Dorsolateral prefrontal cortex (tissue), 120 donors: ENCODE measurements at regions of chr5 and their contacts with region 1.

Region 1: DNA sequence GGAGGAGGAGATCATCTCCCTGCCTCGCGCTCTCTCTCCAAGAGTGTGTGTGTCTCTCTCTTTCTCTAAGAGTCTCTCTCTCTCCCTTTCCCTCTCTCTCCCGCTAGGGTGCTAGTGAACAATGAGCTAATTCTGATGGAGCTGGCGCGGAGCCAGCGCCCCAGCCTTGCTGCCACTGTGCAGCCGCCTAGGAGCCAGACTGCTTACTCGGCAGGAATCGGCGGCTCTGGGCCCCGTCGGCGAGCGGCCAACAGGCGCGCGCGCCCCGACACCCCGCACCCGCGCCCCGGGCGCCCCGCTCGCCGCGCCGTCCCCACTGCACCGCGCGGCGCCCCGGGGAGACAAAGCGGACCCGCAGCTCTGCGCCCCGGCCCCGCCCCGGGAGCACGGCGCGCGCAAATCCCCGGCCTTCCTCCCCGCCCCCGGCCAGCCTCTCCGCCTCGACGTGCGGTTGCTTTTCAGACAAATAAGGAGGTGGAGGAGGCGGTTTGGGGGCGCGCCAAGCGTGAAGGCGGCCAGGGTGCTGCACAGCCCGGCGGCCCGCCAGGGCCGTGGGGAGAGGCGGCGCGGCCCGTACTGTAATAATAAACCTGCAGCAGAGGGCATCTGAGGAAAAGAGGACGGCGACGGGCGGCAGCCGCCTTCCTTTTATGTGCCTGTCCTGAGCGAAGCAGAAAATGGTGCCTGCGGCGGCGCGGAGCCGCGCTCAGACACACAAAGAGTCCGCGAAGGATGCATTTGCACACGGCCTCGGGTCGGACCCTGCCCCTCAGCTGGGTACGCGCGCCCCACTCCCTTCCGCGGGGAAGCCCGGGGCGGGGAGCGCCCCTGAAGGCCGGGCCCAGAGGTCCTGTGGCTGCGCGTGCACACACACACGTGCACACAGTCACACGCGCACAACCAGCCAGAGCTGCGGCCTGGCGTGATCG is 625 bp upstream of the NREP start:
- DNase-seq: peak; percentile 90 to 94 (median 92)
- H3K4me3 ChIP-seq: peak overlapping the region; percentile 49 to 88 (median 73)
- H3K27ac ChIP-seq: peak overlapping the region; percentile 9 to 95 (median 86)
- H3K27me3 ChIP-seq: no peaks in the 10 kb centered on the region
- CTCF ChIP-seq: peak in 45 of 56 donors; percentile 10 to 53 (median 32)

Region 2: DNA sequence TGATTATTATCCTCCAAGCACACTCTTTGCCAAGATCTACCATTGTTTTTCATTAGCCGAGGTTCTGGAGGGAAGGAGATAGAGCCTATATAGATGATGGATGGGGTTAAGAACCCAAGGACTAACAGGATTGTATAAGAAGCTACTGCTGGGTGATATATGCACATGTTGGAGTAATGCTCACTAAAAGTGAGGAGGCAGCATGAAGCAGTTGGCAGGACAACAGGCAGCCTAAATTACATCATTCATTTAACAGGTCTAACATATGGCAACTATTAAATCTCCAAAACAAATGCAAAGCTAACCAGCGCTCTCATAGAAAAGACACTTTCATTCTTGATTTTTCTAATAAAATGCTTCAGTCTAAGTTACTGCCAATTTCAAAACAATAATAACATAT is 368.3 kb after region 1 on chr5:
- intact Hi-C with region 1: loop called in 1 of 2 experiments (anchors 10 kb)
- DNase-seq: peak in 1 of 10 donors; percentile 43
- H3K4me3 ChIP-seq: no peak overlapping the region
- H3K27ac ChIP-seq: peak overlapping the region in 1 of 59 donors; percentile 87
- H3K27me3 ChIP-seq: no peaks in the 10 kb centered on the region
- CTCF ChIP-seq: no peak

Region 3: DNA sequence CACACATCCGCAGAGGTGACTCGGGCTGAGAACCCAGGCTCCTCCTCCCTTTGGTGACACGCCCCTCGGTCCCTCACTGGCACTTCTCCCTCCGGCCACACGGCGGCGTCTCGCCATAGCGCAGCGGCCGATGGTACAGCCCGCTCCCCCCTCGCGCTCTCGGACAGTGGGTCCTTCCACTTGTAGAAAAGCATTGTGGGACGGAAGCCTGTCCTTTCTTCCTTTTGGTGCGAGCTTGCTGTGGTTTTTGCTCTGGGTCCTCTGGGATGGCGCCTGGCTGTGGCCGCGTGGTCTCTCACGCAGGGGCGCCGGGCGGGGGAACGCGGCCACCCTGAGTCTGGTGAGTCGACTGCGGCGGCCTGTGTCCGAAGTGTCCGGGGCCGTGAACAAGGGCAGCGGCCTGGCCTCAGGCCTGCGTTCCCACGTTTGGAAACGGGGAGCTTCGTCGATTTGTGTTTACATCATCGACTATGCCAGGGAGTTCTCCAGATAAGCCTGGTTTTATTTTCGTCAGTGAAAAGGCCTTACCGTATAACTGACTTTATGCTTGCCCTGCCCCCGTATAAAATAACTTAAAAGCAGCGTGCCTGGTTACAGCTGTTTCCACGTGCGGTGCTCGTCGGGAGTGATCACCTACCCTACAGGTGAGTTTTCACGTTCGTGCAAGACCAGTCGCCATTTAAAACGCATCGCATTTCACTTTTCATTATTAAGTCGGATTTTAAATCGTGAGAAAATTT is 403.2 kb after region 1 on chr5:
- intact Hi-C with region 1: loop called in 1 of 2 experiments (anchors 10 kb)
- DNase-seq: peak; percentile 85 to 93 (median 90)
- H3K4me3 ChIP-seq: peak overlapping the region; percentile 53 to 99 (median 90)
- H3K27ac ChIP-seq: peak overlapping the region in 55 of 59 donors; percentile 4 to 95 (median 75)
- H3K27me3 ChIP-seq: no peaks in the 10 kb centered on the region
- CTCF ChIP-seq: peak; percentile 77 to 98 (median 93)